ENCODE measurements at regions of chr12 and their contacts with region 1.

Region 1: GRCh38 chr12:54359033-54359761 is 5.1 kb downstream of the GPR84 start:
- DNase-seq: peak; percentile 96 to 99
- H3K4me3 ChIP-seq: peak overlapping the region; percentile 70
- H3K4me3 Mint-ChIP-seq: no peak overlapping the region
- H3K27ac Mint-ChIP-seq: no peak overlapping the region
- H3K4me1 ChIP-seq: peaks cover 11% of the 10 kb centered on the region
- H3K4me1 Mint-ChIP-seq: peaks cover 7% of the 10 kb centered on the region
- H3K27me3 ChIP-seq: no peaks in the 10 kb centered on the region
- H3K27me3 Mint-ChIP-seq: no peaks in the 10 kb centered on the region
- CTCF ChIP-seq: no peak

Region 2: DNA sequence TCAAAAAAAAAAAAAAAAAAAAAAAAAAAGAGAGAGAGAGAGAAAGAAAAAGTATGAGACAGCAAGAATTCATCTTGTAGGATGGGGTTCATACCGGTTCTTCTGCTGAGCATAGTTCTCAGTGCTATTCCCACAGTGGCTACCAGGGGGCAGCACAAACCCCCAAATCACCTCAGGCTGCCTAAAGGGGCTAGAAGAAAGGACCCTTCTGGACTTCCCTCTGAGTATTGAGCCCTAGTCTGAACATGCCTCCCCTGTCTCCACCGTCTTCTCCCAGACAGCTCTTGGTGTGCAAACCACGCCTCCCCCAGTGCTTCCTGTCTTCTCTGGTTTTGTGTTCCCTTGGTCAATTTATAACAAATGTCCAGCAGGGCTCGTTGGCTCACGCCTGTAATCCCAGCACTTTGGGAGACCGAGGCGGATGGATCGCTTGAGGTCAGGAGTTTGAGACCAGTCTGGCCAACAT is 139.1 kb before region 1 on chr12:
- CTCF ChIA-PET with region 1: interaction called, 8 read pairs
- POLR2A ChIA-PET with region 1: no interaction called
- intact Hi-C with region 1: loop called (anchors 1 kb)
- DNase-seq: peak; percentile 68 to 79
- H3K4me3 ChIP-seq: no peak overlapping the region
- H3K4me3 Mint-ChIP-seq: no peak overlapping the region
- H3K27ac Mint-ChIP-seq: no peak overlapping the region
- H3K4me1 ChIP-seq: peaks cover 4% of the 10 kb centered on the region; the same call in 1 of the 2 replicates
- H3K4me1 Mint-ChIP-seq: no peaks in the 10 kb centered on the region
- H3K27me3 ChIP-seq: no peaks in the 10 kb centered on the region
- H3K27me3 Mint-ChIP-seq: no peaks in the 10 kb centered on the region
- CTCF ChIP-seq: peak; percentile 86

Region 3: DNA sequence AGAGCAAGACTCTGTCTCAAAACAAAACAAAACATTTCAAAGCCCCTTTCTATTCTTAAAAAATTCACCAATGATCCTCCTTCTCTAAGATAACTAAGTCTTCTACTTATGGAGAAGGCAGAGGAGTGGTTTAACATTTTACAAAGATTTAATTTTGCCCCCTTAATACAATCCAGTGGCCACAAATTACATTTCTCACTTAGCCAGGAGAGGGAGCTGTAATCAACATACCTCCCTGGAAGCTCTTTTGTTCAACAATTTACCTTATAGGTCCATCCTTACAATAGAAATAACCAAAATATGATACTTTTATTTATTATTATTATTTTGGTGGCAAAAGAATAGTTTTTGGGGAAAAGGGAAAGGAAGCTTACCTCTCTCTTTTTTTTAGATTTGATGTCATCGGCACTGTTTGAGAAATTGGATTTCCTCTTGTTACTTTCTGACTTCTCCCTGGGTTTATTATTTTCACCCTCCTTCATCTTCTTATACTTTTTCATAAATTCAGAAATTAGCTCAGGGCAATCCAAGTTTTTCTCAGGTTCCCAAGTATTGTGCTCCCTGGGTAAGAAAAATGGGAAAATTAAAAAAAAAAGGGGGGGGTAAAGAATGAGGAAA is 107.4 kb before region 1 on chr12:
- CTCF ChIA-PET with region 1: interaction called, 7 read pairs
- POLR2A ChIA-PET with region 1: interaction called, 4 read pairs
- intact Hi-C with region 1: loop called (anchors 1 kb)
- DNase-seq: peak in 1 of 2 experiments; percentile 37
- H3K4me3 ChIP-seq: no peak overlapping the region
- H3K4me3 Mint-ChIP-seq: no peak overlapping the region
- H3K27ac Mint-ChIP-seq: no peak overlapping the region
- H3K4me1 ChIP-seq: no peaks in the 10 kb centered on the region
- H3K4me1 Mint-ChIP-seq: no peaks in the 10 kb centered on the region
- H3K27me3 ChIP-seq: no peaks in the 10 kb centered on the region
- H3K27me3 Mint-ChIP-seq: no peaks in the 10 kb centered on the region
- CTCF ChIP-seq: peak; percentile 62 to 69

Region 4: GRCh38 chr12:54294152-54294952 is 64.8 kb before region 1 on chr12:
- CTCF ChIA-PET with region 1: interaction called, 5 read pairs
- POLR2A ChIA-PET with region 1: no interaction called
- intact Hi-C with region 1: loop called (anchors 1 kb)
- DNase-seq: peak; percentile 65 to 78
- H3K4me3 ChIP-seq: no peak overlapping the region
- H3K4me3 Mint-ChIP-seq: no peak overlapping the region
- H3K27ac Mint-ChIP-seq: no peak overlapping the region
- H3K4me1 ChIP-seq: 0 out of 2 replicates have a peak, but pooled peaks cover 7% of the 10 kb centered on the region
- H3K4me1 Mint-ChIP-seq: peaks cover 6% of the 10 kb centered on the region
- H3K27me3 ChIP-seq: no peaks in the 10 kb centered on the region
- H3K27me3 Mint-ChIP-seq: no peaks in the 10 kb centered on the region
- CTCF ChIP-seq: peak; percentile 83 to 88

Region 5: GRCh38 chr12:54300732-54301427 is 58.3 kb before region 1 on chr12 and contains the start of gene NFE2:
- CTCF ChIA-PET with region 1: interaction called, 3 read pairs
- POLR2A ChIA-PET with region 1: no interaction called
- intact Hi-C with region 1: loop called (anchors 2 kb)
- DNase-seq: peak; percentile 91
- H3K4me3 ChIP-seq: peak within 1 kb of the TSS; percentile 59
- H3K4me3 Mint-ChIP-seq: peak within 1 kb of the TSS; percentile 79
- H3K27ac Mint-ChIP-seq: peak within 1 kb of the TSS; percentile 60
- H3K4me1 ChIP-seq: peaks cover 35% of the 10 kb centered on the region
- H3K4me1 Mint-ChIP-seq: peaks cover 42% of the 10 kb centered on the region
- H3K27me3 ChIP-seq: no peaks in the 10 kb centered on the region
- H3K27me3 Mint-ChIP-seq: no peaks in the 10 kb centered on the region
- CTCF ChIP-seq: no peak
- total RNA-seq, gene NFE2: 5.7 and 6.2 TPM in 2 replicates

Region 6: GRCh38 chr12:54337280-54337842 is 21.8 kb before region 1 on chr12:
- CTCF ChIA-PET with region 1: interaction called, 33 read pairs
- POLR2A ChIA-PET with region 1: interaction called, 4 read pairs
- intact Hi-C with region 1: loop called (anchors 1 kb)
- DNase-seq: peak in 1 of 2 experiments; percentile 55
- H3K4me3 ChIP-seq: no peak overlapping the region
- H3K4me3 Mint-ChIP-seq: no peak overlapping the region
- H3K27ac Mint-ChIP-seq: no peak overlapping the region
- H3K4me1 ChIP-seq: peaks cover 38% of the 10 kb centered on the region
- H3K4me1 Mint-ChIP-seq: peaks cover 31% of the 10 kb centered on the region
- H3K27me3 ChIP-seq: no peaks in the 10 kb centered on the region
- H3K27me3 Mint-ChIP-seq: no peaks in the 10 kb centered on the region
- CTCF ChIP-seq: peak in 1 of 2 experiments; percentile 6

Region 7: DNA sequence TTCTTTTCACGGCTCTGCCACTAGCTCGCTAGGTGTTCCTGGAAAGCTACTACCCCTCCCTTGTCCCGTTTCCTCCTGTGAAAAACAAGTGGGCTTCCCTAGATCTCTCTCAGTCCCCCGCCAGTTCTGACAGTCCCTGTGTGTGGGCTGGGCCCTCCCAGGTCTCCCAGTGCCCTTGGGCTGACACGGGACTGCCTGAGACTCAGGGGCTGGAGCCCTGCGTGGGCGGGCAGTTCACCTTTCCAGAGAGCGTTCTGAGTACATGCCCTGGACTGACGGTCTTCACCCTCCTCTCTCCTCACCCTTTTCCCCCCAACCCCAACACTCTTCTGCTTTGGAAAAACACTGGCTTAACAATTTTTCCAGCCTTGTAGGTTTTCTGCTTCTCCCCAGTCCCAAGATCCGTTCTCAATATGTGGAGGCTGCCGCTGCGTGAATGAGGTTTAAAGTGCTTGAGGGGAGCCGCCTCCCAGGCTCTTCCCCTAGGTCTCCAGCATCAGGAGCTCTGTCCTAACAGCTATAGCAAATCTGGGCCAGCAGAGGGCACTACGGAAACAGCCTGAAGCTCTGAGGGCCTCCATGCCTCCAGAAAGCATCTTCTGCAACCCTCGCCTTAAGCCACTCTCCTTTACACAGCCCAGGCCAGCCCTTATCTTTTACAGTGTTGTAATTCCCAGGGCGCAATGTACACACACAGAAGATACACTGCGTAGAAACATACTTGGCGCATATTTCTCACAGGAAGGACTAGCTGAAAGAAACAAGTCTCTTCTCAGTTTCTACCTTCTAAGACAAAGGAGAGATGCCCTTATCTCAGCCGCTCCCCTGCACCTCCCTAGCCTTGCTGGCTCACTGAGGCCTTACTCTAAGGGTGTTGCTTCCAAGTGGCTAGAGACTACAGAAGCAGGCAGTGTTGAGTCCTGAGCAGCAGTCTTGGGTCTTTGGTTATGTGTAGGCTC is 299.4 kb after region 1 on chr12:
- CTCF ChIA-PET with region 1: no interaction called
- POLR2A ChIA-PET with region 1: no interaction called
- intact Hi-C with region 1: no loop called
- DNase-seq: peak; percentile 65 to 68
- H3K4me3 ChIP-seq: no peak overlapping the region
- H3K4me3 Mint-ChIP-seq: no peak overlapping the region
- H3K27ac Mint-ChIP-seq: no peak overlapping the region
- H3K4me1 ChIP-seq: no peaks in the 10 kb centered on the region
- H3K4me1 Mint-ChIP-seq: no peaks in the 10 kb centered on the region
- H3K27me3 ChIP-seq: no peaks in the 10 kb centered on the region; the same call in 1 of the 2 replicates
- H3K27me3 Mint-ChIP-seq: peaks cover 16% of the 10 kb centered on the region
- CTCF ChIP-seq: peak; percentile 55 to 72